PC-9 (cell line): ENCODE measurements at regions of chr5 and their contacts with region 1.

Region 1: GRCh38 chr5:33180900-33181299 is 259.9 kb upstream of the TARS1 start:
- DNase-seq: peak in 1 of 2 experiments; percentile 29
- H3K4me3 ChIP-seq: no peak overlapping the region
- H3K27ac ChIP-seq: no peak overlapping the region
- H3K4me1 ChIP-seq: no peaks in the 10 kb centered on the region
- H3K27me3 ChIP-seq: no peaks in the 10 kb centered on the region
- CTCF ChIP-seq: peak; percentile 79

Region 2: GRCh38 chr5:32489791-32490582 is 690.9 kb before region 1 on chr5:
- CTCF ChIA-PET with region 1: no interaction called
- POLR2A ChIA-PET with region 1: no interaction called
- intact Hi-C with region 1: loop called (anchors 1 kb)
- DNase-seq: peak; percentile 58 to 67
- H3K4me3 ChIP-seq: no peak overlapping the region
- H3K27ac ChIP-seq: no peak overlapping the region
- H3K4me1 ChIP-seq: no peaks in the 10 kb centered on the region
- H3K27me3 ChIP-seq: no peaks in the 10 kb centered on the region
- CTCF ChIP-seq: peak; percentile 92

Region 3: GRCh38 chr5:32642276-32643002 is 538.5 kb before region 1 on chr5:
- CTCF ChIA-PET with region 1: no interaction called
- POLR2A ChIA-PET with region 1: no interaction called
- intact Hi-C with region 1: loop called (anchors 5 kb)
- DNase-seq: peak in 1 of 2 experiments; percentile 79
- H3K4me3 ChIP-seq: peak overlapping the region; percentile 28
- H3K27ac ChIP-seq: peak overlapping the region; percentile 39
- H3K4me1 ChIP-seq: peaks cover 22% of the 10 kb centered on the region
- H3K27me3 ChIP-seq: no peaks in the 10 kb centered on the region
- CTCF ChIP-seq: no peak

Region 4: DNA sequence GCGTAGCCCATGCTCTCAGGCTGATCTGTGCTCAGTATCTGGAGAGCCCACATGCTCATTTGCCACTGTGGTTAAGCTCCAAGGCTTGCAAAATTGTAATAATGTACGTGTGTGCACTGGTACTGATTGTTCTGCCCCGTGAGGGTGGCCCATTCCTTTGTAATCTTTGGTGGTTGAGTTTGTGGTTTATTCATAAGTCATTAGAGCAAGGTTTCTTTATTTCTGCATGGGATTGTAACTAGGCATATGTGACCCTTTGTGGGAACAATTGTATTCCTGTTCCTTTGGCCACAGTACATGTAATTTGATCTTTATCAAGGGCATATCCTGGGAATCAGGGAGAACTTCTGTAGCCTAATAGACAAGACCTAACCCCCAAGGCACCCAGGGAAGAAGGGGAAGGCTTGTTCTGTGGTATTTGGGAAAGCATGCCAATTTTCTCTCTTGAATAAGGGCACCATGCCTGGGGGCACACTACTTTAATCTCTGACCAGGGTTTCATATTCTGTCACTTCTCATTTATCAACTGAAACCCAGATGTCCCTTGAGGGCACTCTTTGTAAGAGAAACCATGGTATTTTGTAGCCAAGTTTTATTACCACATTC is 395.2 kb before region 1 on chr5:
- CTCF ChIA-PET with region 1: no interaction called
- POLR2A ChIA-PET with region 1: no interaction called
- intact Hi-C with region 1: loop called (anchors 5 kb)
- DNase-seq: peak; percentile 91 to 96
- H3K4me3 ChIP-seq: peak overlapping the region; percentile 25; the same call in 1 of the 2 replicates
- H3K27ac ChIP-seq: peak overlapping the region; percentile 77
- H3K4me1 ChIP-seq: peaks cover 28% of the 10 kb centered on the region
- H3K27me3 ChIP-seq: peaks cover 45% of the 10 kb centered on the region
- CTCF ChIP-seq: no peak

Region 5: GRCh38 chr5:32928761-32929160 is 252.1 kb before region 1 on chr5:
- CTCF ChIA-PET with region 1: no interaction called
- POLR2A ChIA-PET with region 1: interaction called, 12 read pairs
- intact Hi-C with region 1: no loop called
- DNase-seq: no peak
- H3K4me3 ChIP-seq: no peak overlapping the region
- H3K27ac ChIP-seq: no peak overlapping the region
- H3K4me1 ChIP-seq: no peaks in the 10 kb centered on the region
- H3K27me3 ChIP-seq: no peaks in the 10 kb centered on the region
- CTCF ChIP-seq: no peak

Region 6: DNA sequence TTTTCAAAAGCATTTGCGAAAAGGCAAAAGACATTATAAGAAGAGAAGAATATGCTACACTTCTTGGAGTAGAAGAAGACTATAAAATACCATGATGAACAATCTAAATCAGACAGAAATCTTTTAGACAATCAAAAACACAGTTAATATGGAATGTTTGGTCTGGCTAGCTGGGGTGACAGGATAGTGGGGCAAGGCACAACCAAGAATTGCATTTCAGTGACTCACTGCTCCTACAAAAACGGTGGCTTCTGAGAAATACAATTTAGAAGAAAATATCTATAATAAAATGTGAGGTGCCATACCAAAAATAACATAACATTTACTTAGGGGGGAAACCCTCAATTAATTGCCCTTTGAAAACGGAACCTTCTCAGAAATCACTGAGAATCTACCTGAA is 106.4 kb before region 1 on chr5:
- CTCF ChIA-PET with region 1: no interaction called
- POLR2A ChIA-PET with region 1: no interaction called
- intact Hi-C with region 1: loop called (anchors 2 kb)
- DNase-seq: peak in 1 of 2 experiments; percentile 19
- H3K4me3 ChIP-seq: no peak overlapping the region
- H3K27ac ChIP-seq: no peak overlapping the region
- H3K4me1 ChIP-seq: 0 out of 2 replicates have a peak, but pooled peaks cover 5% of the 10 kb centered on the region
- H3K27me3 ChIP-seq: no peaks in the 10 kb centered on the region
- CTCF ChIP-seq: no peak

Region 7: DNA sequence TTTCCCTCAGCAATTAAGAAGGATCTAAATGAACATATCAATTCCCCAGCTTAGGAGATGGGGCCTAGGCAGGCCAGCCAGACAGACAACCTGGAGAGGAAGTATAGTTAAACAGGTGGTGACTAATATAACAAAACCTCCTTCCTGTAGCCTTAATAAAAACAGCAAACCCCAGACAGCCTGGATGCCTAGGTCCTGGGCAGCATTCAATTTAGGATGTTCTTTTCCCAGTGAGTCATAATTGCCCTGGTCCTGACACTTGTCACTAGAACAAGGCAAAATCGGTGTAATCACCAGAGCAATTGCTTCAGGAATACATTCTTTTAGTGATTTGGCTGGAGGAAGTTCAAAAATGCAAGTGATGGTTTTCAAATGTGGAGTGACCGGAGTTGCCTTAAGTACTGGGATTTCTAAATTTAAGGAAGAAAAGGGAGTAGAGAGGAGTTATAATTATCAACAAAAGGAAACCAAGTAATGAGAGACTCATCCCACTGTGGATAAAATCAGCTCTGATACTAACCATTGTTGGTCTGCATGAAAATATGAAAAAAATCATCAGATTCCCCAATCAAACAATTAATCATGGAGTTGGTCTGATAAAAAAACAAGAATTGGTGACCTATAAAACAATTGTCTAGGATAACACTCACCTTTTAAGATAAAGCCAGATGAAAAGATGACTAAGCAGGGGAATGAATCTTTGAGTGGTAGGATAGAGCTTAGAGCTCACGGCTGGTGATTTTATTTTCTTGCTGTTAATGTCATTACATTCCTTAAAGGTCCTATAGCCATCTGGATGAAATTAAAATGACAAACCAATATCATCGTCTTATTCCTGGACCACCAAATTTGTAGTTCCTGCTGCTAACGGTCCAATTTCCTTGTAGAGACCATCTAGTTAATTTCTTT is 220.8 kb after region 1 on chr5:
- CTCF ChIA-PET with region 1: no interaction called
- POLR2A ChIA-PET with region 1: no interaction called
- intact Hi-C with region 1: loop called (anchors 5 kb)
- DNase-seq: peak; percentile 76 to 92
- H3K4me3 ChIP-seq: no peak overlapping the region
- H3K27ac ChIP-seq: peak overlapping the region; percentile 61
- H3K4me1 ChIP-seq: peaks cover 32% of the 10 kb centered on the region
- H3K27me3 ChIP-seq: no peaks in the 10 kb centered on the region
- CTCF ChIP-seq: no peak